Breast epithelium (tissue), 4 donors: ENCODE measurements at regions of chr12 and their contacts with region 1.

Region 1: DNA sequence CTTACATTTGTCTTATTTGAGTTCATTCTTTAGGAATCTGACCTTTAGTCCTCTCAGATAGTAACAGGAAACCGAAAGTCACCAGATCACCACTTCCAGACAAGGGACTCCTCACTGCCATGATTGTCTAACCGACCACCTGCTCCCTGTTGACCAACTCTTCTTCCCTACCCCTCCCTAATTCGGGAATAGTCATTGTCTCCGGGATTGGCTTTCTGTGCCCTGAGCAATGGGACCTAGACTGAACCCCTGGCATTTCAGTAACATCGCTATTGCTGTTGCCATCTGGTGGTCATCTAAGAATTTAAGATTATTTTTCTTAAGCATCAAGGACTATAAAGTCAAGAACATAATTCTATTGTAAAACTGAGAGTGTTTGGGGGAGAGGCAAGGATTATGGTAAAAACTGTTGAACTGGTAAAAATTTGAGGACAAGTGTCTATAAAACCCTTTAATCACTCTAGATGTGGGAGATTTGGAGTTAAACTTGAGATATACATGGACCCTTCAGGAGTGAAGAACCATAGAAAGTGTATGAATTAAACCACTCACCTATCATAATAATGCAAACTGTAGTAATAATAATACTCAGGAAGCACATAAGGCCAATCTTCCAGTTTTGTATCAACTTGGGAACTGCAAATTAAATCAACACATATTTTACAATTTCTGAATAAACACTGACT is 6.3 kb downstream of the CLEC2A start:
- DNase-seq: no peak
- H3K4me3 ChIP-seq: no peak overlapping the region
- H3K27ac ChIP-seq: no peak overlapping the region
- H3K4me1 ChIP-seq: no peaks in the 10 kb centered on the region
- H3K27me3 ChIP-seq: no peaks in the 10 kb centered on the region
- CTCF ChIP-seq: peak in 1 of 3 donors; percentile 46
- POLR2A ChIP-seq: no peak

Region 2: DNA sequence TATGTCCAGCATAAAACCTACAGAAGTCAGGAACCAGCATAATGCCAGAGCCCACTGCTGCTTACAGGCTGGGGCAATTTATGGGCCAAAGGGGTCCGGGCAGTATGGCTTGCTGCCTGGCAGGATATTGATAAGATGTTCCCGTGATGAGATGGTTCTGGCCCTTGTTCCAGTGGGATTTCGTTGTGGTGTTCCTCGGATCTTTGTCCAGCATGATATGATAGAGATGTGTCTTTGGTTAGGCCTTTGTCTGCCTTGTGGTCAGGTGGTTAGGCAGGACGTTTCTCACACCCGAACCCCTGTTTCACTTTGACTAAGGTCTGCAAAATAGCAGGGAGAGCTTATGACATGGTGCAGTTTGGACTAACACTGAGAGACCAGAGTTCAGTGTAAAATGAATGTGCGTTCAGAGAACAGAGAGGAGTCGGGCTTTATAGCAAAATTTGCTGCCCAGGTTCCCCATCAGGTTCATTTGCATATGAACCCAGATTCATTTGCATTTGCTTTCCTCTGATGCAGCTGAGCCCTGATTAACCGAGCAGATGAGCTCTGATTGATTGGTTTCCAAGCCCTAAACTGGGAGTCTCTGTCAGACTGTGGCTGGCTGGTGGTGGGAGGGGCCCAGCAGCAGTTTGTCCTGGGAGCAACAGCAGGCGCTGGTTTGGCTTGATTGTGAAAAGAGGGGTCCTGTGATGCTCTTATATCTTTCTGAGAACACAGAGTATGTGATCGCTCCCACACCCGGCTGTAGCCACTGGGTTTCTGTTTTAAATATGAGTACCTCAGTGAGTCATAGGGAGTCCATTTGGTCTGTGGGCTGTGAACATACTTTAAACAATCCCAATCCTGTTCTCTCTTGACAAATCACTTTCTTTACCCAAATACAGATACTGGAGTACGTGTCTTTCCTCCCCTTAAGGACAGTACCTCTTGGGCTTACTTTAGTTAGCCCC is 561.4 kb before region 1 on chr12:
- intact Hi-C with region 1: no loop called
- DNase-seq: no peak
- H3K4me3 ChIP-seq: peak overlapping the region in 1 of 3 donors; percentile 13
- H3K27ac ChIP-seq: no peak overlapping the region
- H3K4me1 ChIP-seq: no peaks in the 10 kb centered on the region
- H3K27me3 ChIP-seq: no peaks in the 10 kb centered on the region
- CTCF ChIP-seq: no peak
- POLR2A ChIP-seq: no peak

Region 3: GRCh38 chr12:9813821-9814809 is 111.7 kb before region 1 on chr12:
- intact Hi-C with region 1: loop called (anchors 10 kb)
- DNase-seq: peak; percentile 32 to 75
- H3K4me3 ChIP-seq: peak overlapping the region in 2 of 3 donors; percentile 15 to 58
- H3K27ac ChIP-seq: no peak overlapping the region
- H3K4me1 ChIP-seq: no peaks in the 10 kb centered on the region
- H3K27me3 ChIP-seq: no peaks in the 10 kb centered on the region
- CTCF ChIP-seq: peak; percentile 32 to 56 (median 34)
- POLR2A ChIP-seq: no peak

Region 4: GRCh38 chr12:10652192-10652591 is 726.3 kb after region 1 on chr12:
- intact Hi-C with region 1: no loop called
- DNase-seq: no peak
- H3K4me3 ChIP-seq: no peak overlapping the region
- H3K27ac ChIP-seq: no peak overlapping the region
- H3K4me1 ChIP-seq: no peaks in the 10 kb centered on the region
- H3K27me3 ChIP-seq: no peaks in the 10 kb centered on the region
- CTCF ChIP-seq: no peak
- POLR2A ChIP-seq: no peak

Region 5: DNA sequence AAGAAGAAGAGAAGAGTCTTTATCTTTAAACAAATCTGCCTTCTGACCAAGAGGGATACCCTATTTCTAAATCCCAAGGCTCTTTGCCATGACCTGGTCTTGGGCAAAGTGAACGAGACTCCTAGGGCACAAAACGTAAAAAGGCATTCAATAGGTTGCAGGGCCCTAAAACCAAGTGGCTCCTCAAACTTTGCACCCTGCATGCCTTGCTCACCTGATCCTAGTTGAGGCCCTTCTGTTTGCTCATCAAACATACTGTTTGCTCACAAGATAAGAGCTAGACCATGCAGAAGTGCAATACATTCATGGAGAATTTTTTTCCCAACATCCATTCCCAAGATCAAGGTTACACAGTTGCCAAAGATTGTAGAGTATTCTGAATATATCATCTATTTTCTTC is 966.1 kb after region 1 on chr12:
- intact Hi-C with region 1: no loop called
- DNase-seq: no peak
- H3K4me3 ChIP-seq: no peak overlapping the region
- H3K27ac ChIP-seq: no peak overlapping the region
- H3K4me1 ChIP-seq: no peaks in the 10 kb centered on the region
- H3K27me3 ChIP-seq: no peaks in the 10 kb centered on the region
- CTCF ChIP-seq: no peak
- POLR2A ChIP-seq: no peak